IMR-90 (cell line): ENCODE measurements at regions of chr1 and their contacts with region 1.

Region 1: DNA sequence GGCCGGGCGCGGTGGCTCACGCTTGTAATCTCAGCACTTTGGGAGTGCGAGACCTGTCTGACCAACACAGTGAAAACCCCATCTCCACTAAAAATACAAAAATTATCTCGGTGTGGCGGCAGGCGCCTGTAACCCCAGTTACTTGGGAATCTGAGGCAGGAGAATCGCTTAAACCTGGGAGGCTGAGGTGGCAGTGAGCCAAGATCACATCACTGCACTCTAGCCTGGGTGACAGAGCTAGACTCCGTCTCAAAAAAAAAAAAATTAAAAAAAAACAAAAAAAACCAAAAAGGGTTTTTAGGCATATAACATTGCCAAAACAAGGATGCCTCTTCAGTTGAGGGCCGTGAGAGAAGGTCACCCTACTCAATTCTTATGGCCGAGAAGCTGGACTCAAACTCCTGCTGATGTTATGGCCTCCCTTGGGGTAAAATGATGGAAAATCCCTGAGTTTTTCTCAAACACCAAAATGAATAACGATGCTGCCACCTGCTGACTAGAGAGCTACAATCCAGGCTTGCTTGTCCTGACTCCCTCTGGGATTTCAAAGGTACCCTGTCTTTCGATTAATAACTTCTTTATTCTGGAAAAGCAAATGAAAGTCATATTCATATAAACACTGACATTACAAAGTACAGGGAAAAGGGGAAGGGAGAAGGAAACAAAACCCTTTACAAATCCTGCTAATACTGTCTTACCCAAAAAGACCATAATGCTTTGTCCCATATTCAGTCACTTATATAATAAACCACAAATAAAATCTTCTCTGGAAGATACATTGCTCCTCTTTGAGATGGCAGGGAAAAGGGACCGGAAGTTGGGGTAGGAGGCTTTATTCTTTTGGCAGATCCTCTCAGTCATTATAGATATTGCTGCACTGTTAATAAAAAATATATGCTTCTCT is 10.7 kb downstream of the RAB42 start:
- DNase-seq: peak; percentile 82
- ATAC-seq: peak; percentile 57
- H3K4me3 ChIP-seq: no peak overlapping the region
- H3K27ac ChIP-seq: no peak overlapping the region
- H3K4me1 ChIP-seq: peaks cover 8% of the 10 kb centered on the region
- H3K27me3 ChIP-seq: no peaks in the 10 kb centered on the region
- CTCF ChIP-seq: peak; percentile 84
- POLR2A ChIP-seq: no peak
- RAD21 ChIP-seq: peak; percentile 88

Region 2: GRCh38 chr1:28259307-28260167 is 343.3 kb before region 1 on chr1 and contains the start of gene SESN2:
- CTCF ChIA-PET with region 1: no interaction called
- POLR2A ChIA-PET with region 1: no interaction called
- dilution Hi-C with region 1: no loop called
- in situ Hi-C with region 1: loop called (anchors 10 kb)
- intact Hi-C with region 1: loop called (anchors 5 kb)
- DNase-seq: peak; percentile 99
- ATAC-seq: peak; percentile 88
- H3K4me3 ChIP-seq: peak within 1 kb of the TSS; percentile 99
- H3K27ac ChIP-seq: peak within 1 kb of the TSS; percentile 92
- H3K4me1 ChIP-seq: peaks cover 15% of the 10 kb centered on the region
- H3K27me3 ChIP-seq: no peaks in the 10 kb centered on the region
- CTCF ChIP-seq: 0 out of 2 replicates have a peak, but pooled peaks have one; percentile 0
- POLR2A ChIP-seq: peak; percentile 100
- RAD21 ChIP-seq: no peak; the same call in 1 of the 2 replicates
- total RNA-seq, gene SESN2: 8.1 and 10.2 TPM in 2 replicates

Region 3: GRCh38 chr1:28359592-28360239 is 243.1 kb before region 1 on chr1:
- CTCF ChIA-PET with region 1: interaction called, 3 read pairs
- POLR2A ChIA-PET with region 1: no interaction called
- dilution Hi-C with region 1: no loop called
- in situ Hi-C with region 1: loop called (anchors 10 kb)
- intact Hi-C with region 1: loop called (anchors 2 kb)
- DNase-seq: peak; percentile 64
- ATAC-seq: peak; percentile 72
- H3K4me3 ChIP-seq: no peak overlapping the region
- H3K27ac ChIP-seq: no peak overlapping the region
- H3K4me1 ChIP-seq: no peaks in the 10 kb centered on the region
- H3K27me3 ChIP-seq: peaks cover 5% of the 10 kb centered on the region
- CTCF ChIP-seq: peak; percentile 62
- POLR2A ChIP-seq: no peak
- RAD21 ChIP-seq: peak; percentile 65

Region 4: DNA sequence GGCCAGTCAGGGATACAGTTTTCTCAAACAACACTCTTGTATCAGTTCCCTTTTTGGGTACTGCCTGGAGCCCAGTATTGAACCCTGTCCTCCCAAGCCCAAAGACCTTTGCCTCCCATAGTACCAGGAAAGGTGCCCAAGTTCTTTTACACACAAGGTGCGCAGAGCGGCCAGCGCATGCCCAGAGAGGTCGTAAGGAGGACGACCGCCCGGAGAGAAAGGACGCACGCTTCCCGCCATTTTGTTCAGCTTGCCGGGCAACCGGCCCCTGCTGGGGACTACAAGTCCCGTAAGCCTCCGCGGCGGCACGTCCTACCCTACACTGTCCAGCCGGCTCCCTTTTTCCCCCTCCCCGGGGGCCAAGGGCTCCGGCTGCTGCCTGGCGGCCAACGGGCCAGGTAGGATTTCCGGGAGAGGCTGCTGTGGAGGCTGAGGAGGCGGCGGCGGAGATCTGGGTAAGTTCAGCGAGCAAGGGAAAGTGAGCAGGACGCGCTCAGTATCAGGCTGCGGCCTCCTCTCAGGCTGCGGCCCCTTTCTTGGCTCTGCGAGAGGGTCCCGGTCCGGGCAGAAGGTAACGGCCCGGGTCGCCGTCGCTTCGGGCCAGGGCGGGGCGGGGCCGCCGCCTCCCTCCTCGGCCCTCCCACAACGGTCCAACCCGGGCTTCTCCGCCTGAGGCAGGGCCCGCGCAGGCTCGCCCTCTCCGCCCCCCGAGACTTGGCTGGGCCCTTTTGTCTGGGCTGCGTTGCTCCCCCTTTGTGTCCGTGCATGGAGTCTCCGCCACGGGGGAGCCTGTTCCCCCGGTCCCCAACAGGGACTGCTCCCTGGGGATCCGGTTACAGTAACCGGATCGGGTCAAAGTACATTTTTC is 233.2 kb before region 1 on chr1 and contains the start of gene PHACTR4:
- CTCF ChIA-PET with region 1: no interaction called
- POLR2A ChIA-PET with region 1: no interaction called
- dilution Hi-C with region 1: no loop called
- in situ Hi-C with region 1: loop called (anchors 10 kb)
- intact Hi-C with region 1: no loop called
- DNase-seq: peak; percentile 91
- ATAC-seq: peak; percentile 95
- H3K4me3 ChIP-seq: peak within 1 kb of the TSS; percentile 66
- H3K27ac ChIP-seq: peak within 1 kb of the TSS; percentile 93
- H3K4me1 ChIP-seq: 0 out of 2 replicates have a peak, but pooled peaks cover 5% of the 10 kb centered on the region
- H3K27me3 ChIP-seq: no peaks in the 10 kb centered on the region
- CTCF ChIP-seq: no peak
- POLR2A ChIP-seq: peak; percentile 76; the same call in 1 of the 2 replicates
- RAD21 ChIP-seq: no peak
- total RNA-seq, gene PHACTR4: 6.9 and 7.5 TPM in 2 replicates

Region 5: GRCh38 chr1:28409090-28409489 is 193.7 kb before region 1 on chr1:
- CTCF ChIA-PET with region 1: no interaction called
- POLR2A ChIA-PET with region 1: no interaction called
- dilution Hi-C with region 1: no loop called
- in situ Hi-C with region 1: loop called (anchors 5 kb)
- intact Hi-C with region 1: loop called (anchors 1 kb)
- DNase-seq: no peak
- ATAC-seq: no peak
- H3K4me3 ChIP-seq: no peak overlapping the region
- H3K27ac ChIP-seq: no peak overlapping the region
- H3K4me1 ChIP-seq: no peaks in the 10 kb centered on the region
- H3K27me3 ChIP-seq: no peaks in the 10 kb centered on the region
- CTCF ChIP-seq: no peak
- POLR2A ChIP-seq: no peak
- RAD21 ChIP-seq: no peak

Region 6: DNA sequence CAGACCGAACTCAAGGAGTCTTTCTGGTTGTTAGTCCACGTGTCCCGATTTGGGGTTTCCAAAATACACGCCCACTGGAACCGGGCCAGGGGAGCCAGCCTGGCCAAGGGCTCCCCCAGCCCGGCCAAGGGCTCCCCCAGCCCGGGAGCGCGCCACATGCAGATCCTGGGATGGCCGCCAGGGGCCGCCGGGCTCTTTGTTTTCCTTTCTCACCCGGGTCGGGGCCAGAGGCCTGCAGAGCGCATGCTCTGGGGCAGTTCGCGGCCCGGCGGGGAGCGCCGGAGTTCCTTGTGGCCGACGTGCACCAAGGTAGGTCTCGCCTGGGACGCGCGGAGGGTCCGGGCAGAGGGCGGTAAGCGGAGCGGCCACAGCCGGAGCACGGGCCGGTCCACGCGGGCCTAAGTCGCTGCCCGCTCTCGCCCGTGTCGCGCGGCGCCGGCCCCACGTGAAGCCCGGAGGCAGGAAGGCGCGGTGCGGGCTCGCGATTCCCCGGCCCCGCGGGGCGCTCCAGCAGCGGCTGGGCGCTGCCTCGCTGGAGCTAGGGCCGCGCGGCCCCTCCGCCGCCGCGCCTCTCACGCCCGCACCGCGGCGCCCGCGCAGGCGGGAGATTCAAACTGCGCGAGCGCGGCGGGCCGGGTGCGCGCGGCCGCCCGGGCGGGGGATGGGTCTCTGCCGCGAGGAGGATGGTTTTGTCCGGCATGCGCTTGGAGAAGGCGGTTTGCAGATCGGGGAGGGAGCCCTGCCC is 84.6 kb before region 1 on chr1:
- CTCF ChIA-PET with region 1: interaction called, 7 read pairs
- POLR2A ChIA-PET with region 1: no interaction called
- dilution Hi-C with region 1: no loop called
- in situ Hi-C with region 1: loop called (anchors 5 kb)
- intact Hi-C with region 1: loop called (anchors 1 kb)
- DNase-seq: peak; percentile 81
- ATAC-seq: peak; percentile 86
- H3K4me3 ChIP-seq: peak overlapping the region; percentile 78
- H3K27ac ChIP-seq: peak overlapping the region; percentile 76
- H3K4me1 ChIP-seq: peaks cover 9% of the 10 kb centered on the region
- H3K27me3 ChIP-seq: no peaks in the 10 kb centered on the region
- CTCF ChIP-seq: peak; percentile 91
- POLR2A ChIP-seq: no peak; the same call in 1 of the 2 replicates
- RAD21 ChIP-seq: peak; percentile 72

Region 7: DNA sequence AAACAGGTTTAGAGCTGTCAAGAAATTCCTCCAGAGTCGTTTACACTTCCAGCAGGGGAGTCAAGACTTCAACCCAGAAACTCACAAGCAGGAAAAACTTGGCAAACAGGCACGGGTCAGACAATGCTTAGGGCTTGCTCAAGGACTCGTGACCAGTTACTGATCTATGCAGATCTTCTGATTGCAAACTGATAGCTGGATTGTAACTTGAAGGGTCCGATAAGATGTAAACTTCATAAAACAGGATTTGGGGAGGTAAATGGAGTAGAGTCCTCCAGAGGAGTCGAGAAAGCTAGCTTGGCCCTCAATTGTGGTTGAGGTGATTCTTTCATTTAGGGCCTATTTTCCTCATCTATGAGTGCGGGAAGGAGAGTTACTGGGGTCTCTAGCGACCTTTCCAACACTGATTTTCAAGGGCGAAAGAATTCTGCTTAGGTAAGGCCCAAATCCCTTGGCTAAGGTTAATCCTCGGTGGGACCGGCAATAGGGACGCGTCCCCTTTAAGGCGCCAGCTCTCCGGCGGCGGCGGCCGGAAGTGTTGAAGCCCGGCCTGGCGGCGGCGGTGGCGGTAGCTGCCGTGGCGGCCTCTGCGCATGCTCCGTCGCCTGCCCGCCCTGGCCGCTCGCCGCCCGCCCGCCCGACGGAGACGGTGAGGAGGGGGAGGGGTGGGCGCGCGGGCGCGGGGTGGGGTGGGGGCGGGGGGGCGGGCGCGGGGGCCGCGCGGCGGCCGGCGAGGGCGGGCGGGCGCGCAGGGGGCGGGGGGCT is 65.6 kb after region 1 on chr1 and contains the start of gene GMEB1:
- CTCF ChIA-PET with region 1: no interaction called
- POLR2A ChIA-PET with region 1: no interaction called
- dilution Hi-C with region 1: no loop called
- in situ Hi-C with region 1: no loop called
- intact Hi-C with region 1: no loop called
- DNase-seq: peak; percentile 77
- ATAC-seq: peak; percentile 81
- H3K4me3 ChIP-seq: peak within 1 kb of the TSS; percentile 59
- H3K27ac ChIP-seq: peak within 1 kb of the TSS; percentile 93
- H3K4me1 ChIP-seq: peaks cover 2% of the 10 kb centered on the region
- H3K27me3 ChIP-seq: no peaks in the 10 kb centered on the region
- CTCF ChIP-seq: 0 out of 2 replicates have a peak, but pooled peaks have one; percentile 5
- POLR2A ChIP-seq: no peak
- RAD21 ChIP-seq: no peak
- total RNA-seq, gene GMEB1: 7.9 and 8.6 TPM in 2 replicates